ENCODE measurements at regions of chr16 and their contacts with region 1.

Region 1: GRCh38 chr16:8878521-8878911 is 3.6 kb upstream of the LITAFD start:
- DNase-seq: no peak
- ATAC-seq: no peak
- H3K4me3 ChIP-seq: no peak overlapping the region
- H3K4me3 Mint-ChIP-seq: no peak overlapping the region
- H3K27ac ChIP-seq: no peak overlapping the region
- H3K27ac Mint-ChIP-seq: peak overlapping the region; percentile 54 to 69
- H3K4me1 ChIP-seq: peaks cover 0 to 18% of the 10 kb centered on the region in 2 experiments
- H3K4me1 Mint-ChIP-seq: peaks cover 13 to 17% (median 14%) of the 10 kb centered on the region in 3 donors
- H3K27me3 ChIP-seq: peaks cover 0 to 9% of the 10 kb centered on the region in 2 experiments
- H3K27me3 Mint-ChIP-seq: peaks cover 0 to 3% of the 10 kb centered on the region in 2 donors

Region 2: GRCh38 chr16:8567750-8568617 is 310.5 kb before region 1 on chr16:
- CTCF ChIA-PET with region 1: interaction called, 14 to 15 read pairs
- POLR2A ChIA-PET with region 1: no interaction called
- DNase-seq: peak; percentile 52 to 89 (median 69)
- ATAC-seq: peak; percentile 87 to 94 (median 90)
- H3K4me3 ChIP-seq: no peak overlapping the region
- H3K4me3 Mint-ChIP-seq: no peak overlapping the region
- H3K27ac ChIP-seq: no peak overlapping the region
- H3K27ac Mint-ChIP-seq: peak overlapping the region in 1 of 2 donors; percentile 71
- H3K4me1 ChIP-seq: peaks cover 0 to 6% of the 10 kb centered on the region in 2 experiments
- H3K4me1 Mint-ChIP-seq: peaks cover 6 to 8% (median 8%) of the 10 kb centered on the region in 3 donors
- H3K27me3 ChIP-seq: peaks cover 2 to 30% of the 10 kb centered on the region in 2 experiments
- H3K27me3 Mint-ChIP-seq: peaks cover 13 to 14% of the 10 kb centered on the region in 2 donors

Measured in T-cell (primary cell).